Naive thymus-derived CD4-positive, alpha-beta T cell (primary cell): ENCODE measurements at regions of chr1 and their contacts with region 1.

Region 1: DNA sequence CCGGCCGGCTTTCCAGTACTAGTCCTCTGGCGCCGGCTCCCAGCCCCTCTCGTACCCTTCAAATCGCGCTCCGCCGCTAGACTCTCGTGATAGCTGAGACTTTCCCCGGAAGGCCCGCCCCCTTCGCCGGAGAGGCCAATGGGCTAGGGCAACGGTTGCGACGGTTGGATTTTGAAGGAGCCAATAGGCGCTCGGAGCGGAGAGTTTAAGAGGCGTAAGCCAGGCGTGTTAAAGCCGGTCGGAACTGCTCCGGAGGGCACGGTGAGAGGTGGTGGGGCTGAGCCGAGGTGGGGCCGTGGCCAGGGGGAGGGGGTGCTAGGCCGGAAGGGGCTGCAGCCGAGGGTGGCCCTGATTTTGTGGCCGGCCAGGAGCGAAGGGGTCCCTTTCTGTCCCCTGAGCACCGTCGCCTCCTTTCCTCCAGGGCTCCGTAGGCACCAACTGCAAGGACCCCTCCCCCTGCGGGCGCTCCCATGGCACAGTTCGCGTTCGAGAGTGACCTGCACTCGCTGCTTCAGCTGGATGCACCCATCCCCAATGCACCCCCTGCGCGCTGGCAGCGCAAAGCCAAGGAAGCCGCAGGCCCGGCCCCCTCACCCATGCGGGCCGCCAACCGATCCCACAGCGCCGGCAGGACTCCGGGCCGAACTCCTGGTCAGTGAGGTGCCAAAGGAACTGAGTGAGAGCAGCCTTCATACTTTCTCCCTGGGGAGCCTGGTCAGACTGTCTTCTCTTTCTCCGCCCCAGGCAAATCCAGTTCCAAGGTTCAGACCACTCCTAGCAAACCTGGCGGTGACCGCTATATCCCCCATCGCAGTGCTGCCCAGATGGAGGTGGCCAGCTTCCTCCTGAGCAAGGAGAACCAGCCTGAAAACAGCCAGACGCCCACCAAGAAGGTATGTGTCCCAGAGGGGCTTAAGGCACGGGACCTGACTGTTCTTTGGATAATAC is at the start of gene CDC20:
- DNase-seq: peak; percentile 91 to 99 (median 96)
- ATAC-seq: peak; percentile 100
- H3K4me3 ChIP-seq: peak within 1 kb of the TSS; percentile 90
- H3K4me3 Mint-ChIP-seq: peak within 1 kb of the TSS; percentile 74 to 97 (median 90)
- H3K27ac ChIP-seq: peak within 1 kb of the TSS; percentile 78
- H3K27ac Mint-ChIP-seq: peak within 1 kb of the TSS; percentile 22 to 88 (median 87)
- H3K4me1 ChIP-seq: peaks cover 5 to 10% of the 10 kb centered on the region in 2 donors
- H3K4me1 Mint-ChIP-seq: peaks cover 10 to 55% (median 20%) of the 10 kb centered on the region in 7 donors
- H3K27me3 ChIP-seq: no peaks in the 10 kb centered on the region
- H3K27me3 Mint-ChIP-seq: no peaks in the 10 kb centered on the region
- total RNA-seq, gene CDC20: 0.38 to 101 (median 0.78) TPM

Region 2: DNA sequence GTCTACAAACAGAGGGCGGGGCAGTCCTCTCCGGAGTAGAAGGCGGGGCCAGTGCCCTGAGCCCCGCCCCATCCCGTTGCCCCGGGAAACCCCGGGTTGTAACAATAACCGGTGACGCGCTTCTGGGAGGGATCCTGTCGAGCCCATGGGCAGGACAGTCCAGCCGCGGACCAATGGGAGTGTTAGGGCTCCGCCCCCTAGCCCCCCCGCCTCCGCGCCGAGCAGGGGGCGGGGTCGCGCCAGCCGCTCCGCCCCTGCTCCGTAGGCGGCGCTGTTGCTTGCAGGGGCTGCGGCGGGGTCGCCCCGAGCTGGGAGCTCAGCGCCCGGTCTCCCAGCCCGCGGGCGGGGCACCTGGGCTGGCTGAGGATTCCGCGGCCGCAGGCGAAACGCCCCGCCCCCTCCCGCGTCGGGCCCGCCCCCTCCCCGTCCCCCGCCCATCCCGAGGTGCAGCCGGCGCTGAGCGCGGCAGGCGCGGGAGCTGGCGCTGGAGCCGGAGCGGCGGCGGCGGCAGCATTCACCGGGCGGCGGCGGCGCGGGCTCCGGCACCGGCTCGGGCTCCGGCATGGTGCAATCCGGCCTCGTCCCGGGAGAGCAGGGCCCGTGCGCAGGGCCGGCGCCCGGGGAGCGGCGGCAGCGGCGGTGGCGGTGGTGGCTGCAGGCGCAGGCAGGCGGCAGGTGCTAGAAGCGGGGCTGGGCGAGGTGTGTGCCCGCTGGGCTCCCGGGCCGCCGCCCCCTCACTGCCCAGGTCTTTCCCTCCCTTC is 1997.8 kb before region 1 on chr1 and contains the start of gene FOXO6:
- CTCF ChIA-PET with region 1: no interaction called
- POLR2A ChIA-PET with region 1: no interaction called
- intact Hi-C with region 1: loop called in 1 of 2 experiments (anchors 5 kb)
- DNase-seq: peak; percentile 87 to 94 (median 91)
- ATAC-seq: peak; percentile 95
- H3K4me3 ChIP-seq: peak within 1 kb of the TSS; percentile 51
- H3K4me3 Mint-ChIP-seq: peak within 1 kb of the TSS; percentile 65 to 86 (median 80)
- H3K27ac ChIP-seq: peak within 1 kb of the TSS; percentile 25
- H3K27ac Mint-ChIP-seq: peak within 1 kb of the TSS in 7 of 9 donors; percentile 3 to 91 (median 73)
- H3K4me1 ChIP-seq: peaks cover 4 to 6% of the 10 kb centered on the region in 2 donors
- H3K4me1 Mint-ChIP-seq: peaks cover 4 to 28% (median 9%) of the 10 kb centered on the region in 7 donors
- H3K27me3 ChIP-seq: peaks cover 5 to 7% of the 10 kb centered on the region in 2 donors
- H3K27me3 Mint-ChIP-seq: peaks cover 10 to 58% (median 35%) of the 10 kb centered on the region in 5 donors
- total RNA-seq, gene FOXO6: 0.66 to 1.3 TPM in 2 of 5 experiments, not detected in the others

Region 3: GRCh38 chr1:43227143-43227764 is 131.8 kb before region 1 on chr1:
- CTCF ChIA-PET with region 1: no interaction called
- POLR2A ChIA-PET with region 1: no interaction called
- intact Hi-C with region 1: loop called (anchors 1 kb)
- DNase-seq: peak; percentile 50 to 86 (median 76)
- ATAC-seq: peak; percentile 94
- H3K4me3 ChIP-seq: no peak overlapping the region
- H3K4me3 Mint-ChIP-seq: no peak overlapping the region
- H3K27ac ChIP-seq: no peak overlapping the region
- H3K27ac Mint-ChIP-seq: peak overlapping the region in 3 of 9 donors; percentile 20 to 41 (median 33)
- H3K4me1 ChIP-seq: no peaks in the 10 kb centered on the region
- H3K4me1 Mint-ChIP-seq: peaks cover 0 to 8% (median 0%) of the 10 kb centered on the region in 7 donors
- H3K27me3 ChIP-seq: no peaks in the 10 kb centered on the region
- H3K27me3 Mint-ChIP-seq: peaks cover 0 to 17% (median 0%) of the 10 kb centered on the region in 5 donors

Region 4: DNA sequence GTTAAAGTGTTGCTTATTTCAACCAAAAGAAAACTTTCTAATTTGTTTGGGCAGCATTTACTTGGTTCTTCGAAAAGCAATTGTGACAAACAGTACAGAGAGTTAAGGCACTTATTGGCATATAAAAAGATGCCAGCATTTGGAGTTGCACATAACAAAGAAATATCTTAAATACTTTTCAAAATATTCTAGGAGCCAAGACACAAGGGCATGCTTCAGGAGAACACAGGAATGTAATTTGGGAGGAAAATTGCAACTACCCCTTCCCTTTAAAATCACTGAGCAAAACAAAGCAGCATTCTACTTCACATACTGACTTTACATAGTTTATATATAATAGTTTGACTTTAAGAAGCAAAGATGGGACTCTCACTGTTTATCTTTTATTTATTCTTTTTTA is 62.8 kb before region 1 on chr1:
- CTCF ChIA-PET with region 1: no interaction called
- POLR2A ChIA-PET with region 1: no interaction called
- intact Hi-C with region 1: loop called in 1 of 2 experiments (anchors 5 kb)
- DNase-seq: no peak
- ATAC-seq: no peak
- H3K4me3 ChIP-seq: no peak overlapping the region
- H3K4me3 Mint-ChIP-seq: peak overlapping the region in 4 of 10 donors; percentile 50 to 75 (median 63)
- H3K27ac ChIP-seq: peak overlapping the region; percentile 46
- H3K27ac Mint-ChIP-seq: peak overlapping the region; percentile 56 to 95 (median 80)
- H3K4me1 ChIP-seq: peaks cover 8 to 16% of the 10 kb centered on the region in 2 donors
- H3K4me1 Mint-ChIP-seq: peaks cover 4 to 29% (median 22%) of the 10 kb centered on the region in 7 donors
- H3K27me3 ChIP-seq: no peaks in the 10 kb centered on the region
- H3K27me3 Mint-ChIP-seq: no peaks in the 10 kb centered on the region

Region 5: GRCh38 chr1:43389326-43390313 is 30.6 kb after region 1 on chr1 and contains the starts of genes MED8 and SZT2:
- CTCF ChIA-PET with region 1: no interaction called
- POLR2A ChIA-PET with region 1: interaction called, 16 read pairs
- intact Hi-C with region 1: loop called (anchors 1 kb)
- DNase-seq: peak; percentile 75 to 91 (median 88)
- ATAC-seq: peak; percentile 98
- H3K4me3 ChIP-seq: peak within 1 kb of the TSS; percentile 96
- H3K4me3 Mint-ChIP-seq: peak within 1 kb of the TSS; percentile 95 to 100 (median 100)
- H3K27ac ChIP-seq: peak within 1 kb of the TSS; percentile 93
- H3K27ac Mint-ChIP-seq: peak within 1 kb of the TSS; percentile 95 to 100 (median 99)
- H3K4me1 ChIP-seq: peaks cover 20 to 21% of the 10 kb centered on the region in 2 donors
- H3K4me1 Mint-ChIP-seq: peaks cover 42 to 69% (median 56%) of the 10 kb centered on the region in 7 donors
- H3K27me3 ChIP-seq: no peaks in the 10 kb centered on the region
- H3K27me3 Mint-ChIP-seq: no peaks in the 10 kb centered on the region
- total RNA-seq, gene MED8: 14.5 to 37.8 (median 30.1) TPM
- total RNA-seq, gene SZT2: 80.5 to 153 (median 131) TPM